SK-N-SH (cell line): ENCODE measurements at regions of chr13 and their contacts with region 1.

Region 1: GRCh38 chr13:24053519-24054251 is 106.8 kb upstream of the SPATA13 start:
- DNase-seq: peak; percentile 76
- H3K4me3 ChIP-seq: no peak overlapping the region
- H3K27ac ChIP-seq: no peak overlapping the region
- H3K4me1 ChIP-seq: peaks cover 5 to 15% of the 10 kb centered on the region in 2 experiments; a peak in 3 of 4 replicates
- H3K27me3 ChIP-seq: no peaks in the 10 kb centered on the region
- CTCF ChIP-seq: peak; percentile 75
- EP300 ChIP-seq: no peak
- RAD21 ChIP-seq: peak; percentile 81

Region 2: DNA sequence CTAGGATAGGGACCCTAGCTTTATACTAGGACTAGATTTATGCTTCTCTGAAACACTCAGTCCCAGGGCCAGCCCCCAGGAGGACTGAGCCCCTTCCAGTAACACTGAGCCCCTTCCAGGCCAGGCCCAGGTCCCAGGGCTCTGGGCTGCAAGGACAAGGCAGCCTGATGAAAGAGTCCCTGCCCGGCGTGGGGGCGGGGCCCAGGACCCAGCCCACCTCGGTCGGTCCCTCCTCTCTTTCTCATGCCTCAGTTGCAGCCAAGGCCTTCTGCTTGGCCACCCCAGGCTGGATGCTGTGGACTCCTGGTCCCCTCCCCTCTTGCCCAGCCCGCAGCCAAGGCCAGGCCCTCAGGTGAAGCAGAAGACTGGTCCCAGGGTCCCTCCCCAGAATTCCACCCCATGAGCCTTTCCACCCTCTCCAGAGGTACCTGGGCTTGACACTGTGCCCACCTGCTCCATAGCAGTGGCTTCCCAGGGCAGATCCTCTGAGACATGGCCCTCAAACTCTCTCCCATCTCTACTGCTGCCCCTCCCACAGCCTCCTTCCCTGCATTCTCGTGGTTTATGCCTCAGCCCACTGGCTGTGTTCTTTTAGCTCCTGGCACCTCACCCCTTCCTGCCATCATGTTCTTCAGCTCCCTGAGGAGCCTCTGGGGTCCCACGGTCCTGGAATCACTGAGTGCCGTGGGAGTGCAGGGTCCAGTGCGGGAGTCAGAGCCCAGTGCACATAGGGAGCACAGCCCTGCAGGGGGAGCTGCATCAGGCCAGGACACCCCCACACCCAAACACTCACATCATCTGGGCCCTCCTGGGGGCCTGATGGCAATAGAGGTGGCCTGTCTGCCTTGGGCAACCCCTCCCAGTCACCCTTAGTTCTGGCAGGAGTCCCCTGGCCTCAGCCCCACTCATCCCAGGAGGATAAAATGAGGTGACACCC is 102.7 kb before region 1 on chr13:
- CTCF ChIA-PET with region 1: no interaction called
- POLR2A ChIA-PET with region 1: no interaction called
- DNase-seq: no peak
- H3K4me3 ChIP-seq: no peak overlapping the region
- H3K27ac ChIP-seq: no peak overlapping the region
- H3K4me1 ChIP-seq: no peaks in the 10 kb centered on the region; a peak in 1 of 4 replicates
- H3K27me3 ChIP-seq: no peaks in the 10 kb centered on the region
- CTCF ChIP-seq: no peak
- EP300 ChIP-seq: no peak
- RAD21 ChIP-seq: no peak

Region 3: DNA sequence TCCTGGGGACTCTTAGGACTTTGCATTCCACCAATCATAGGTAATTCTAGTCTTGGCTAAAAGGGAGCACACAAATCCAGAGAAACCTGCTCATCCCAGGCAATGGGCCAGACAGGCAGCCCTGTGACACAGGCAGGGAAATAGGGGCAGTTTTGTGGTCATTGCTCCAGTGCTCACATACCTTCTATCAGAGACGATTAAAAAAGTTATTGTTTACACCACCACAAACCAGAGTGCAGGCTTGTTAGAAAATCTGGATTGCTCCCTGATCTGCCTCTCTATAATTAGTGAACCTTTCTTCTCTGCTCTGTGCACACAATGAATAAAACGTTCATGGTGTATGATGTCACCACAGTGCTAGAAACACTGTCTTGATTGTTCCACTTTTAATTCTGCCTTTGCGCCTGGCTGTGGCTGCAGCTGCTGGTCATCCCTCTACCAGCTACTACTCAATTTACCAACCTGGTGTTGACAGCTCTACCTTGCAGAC is 14.8 kb before region 1 on chr13:
- CTCF ChIA-PET with region 1: interaction called, 22 read pairs
- POLR2A ChIA-PET with region 1: no interaction called
- DNase-seq: no peak
- H3K4me3 ChIP-seq: no peak overlapping the region
- H3K27ac ChIP-seq: peak overlapping the region; percentile 25 to 54; a peak in 2 of 4 replicates
- H3K4me1 ChIP-seq: peaks cover 0 to 13% of the 10 kb centered on the region in 2 experiments; a peak in 1 of 4 replicates
- H3K27me3 ChIP-seq: no peaks in the 10 kb centered on the region
- CTCF ChIP-seq: no peak
- EP300 ChIP-seq: peak in 1 of 2 experiments; percentile 21; a peak in 1 of 4 replicates
- RAD21 ChIP-seq: no peak

Region 4: GRCh38 chr13:24202215-24202614 is 148.5 kb after region 1 on chr13:
- CTCF ChIA-PET with region 1: interaction called, 10 read pairs
- POLR2A ChIA-PET with region 1: no interaction called
- DNase-seq: no peak
- H3K4me3 ChIP-seq: no peak overlapping the region
- H3K27ac ChIP-seq: no peak overlapping the region
- H3K4me1 ChIP-seq: no peaks in the 10 kb centered on the region; a peak in 2 of 4 replicates
- H3K27me3 ChIP-seq: no peaks in the 10 kb centered on the region
- CTCF ChIP-seq: no peak
- EP300 ChIP-seq: no peak
- RAD21 ChIP-seq: no peak

Region 5: GRCh38 chr13:24220086-24220703 is 166.5 kb after region 1 on chr13:
- CTCF ChIA-PET with region 1: interaction called, 58 read pairs
- POLR2A ChIA-PET with region 1: no interaction called
- DNase-seq: peak; percentile 77
- H3K4me3 ChIP-seq: no peak overlapping the region; a peak in 1 of 4 replicates
- H3K27ac ChIP-seq: no peak overlapping the region
- H3K4me1 ChIP-seq: peaks cover 0 to 11% of the 10 kb centered on the region in 2 experiments; a peak in 2 of 4 replicates
- H3K27me3 ChIP-seq: no peaks in the 10 kb centered on the region
- CTCF ChIP-seq: peak; percentile 85
- EP300 ChIP-seq: no peak
- RAD21 ChIP-seq: peak; percentile 96

Region 6: DNA sequence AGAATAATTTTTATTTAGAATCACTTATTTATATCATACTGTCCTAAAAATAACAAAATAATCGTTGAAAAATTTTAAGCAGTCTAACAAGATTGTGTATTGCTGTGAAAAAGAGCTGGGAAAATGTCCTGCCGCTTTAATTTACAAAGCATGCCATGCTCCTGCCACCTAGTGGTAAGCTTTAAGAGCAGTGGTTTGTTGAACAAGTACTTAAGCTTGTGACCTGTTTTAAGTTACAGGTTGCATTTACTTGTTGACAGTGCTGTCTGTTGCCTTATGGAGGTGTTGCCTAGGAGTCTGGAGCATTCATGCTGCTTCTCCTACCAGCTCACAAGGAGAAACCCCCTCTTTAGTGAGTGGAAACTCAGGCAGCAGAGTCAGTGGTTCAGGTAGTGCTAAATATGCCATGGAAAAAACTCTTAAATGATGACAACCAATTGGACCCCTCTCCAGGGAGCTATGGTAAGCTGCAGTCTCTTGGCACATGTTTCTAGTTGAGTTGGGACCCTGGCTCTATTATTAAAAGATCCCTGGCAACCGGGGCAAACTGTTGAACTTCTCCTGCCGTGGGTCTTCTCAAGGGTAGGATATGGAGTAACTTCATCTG is 175.3 kb after region 1 on chr13:
- CTCF ChIA-PET with region 1: interaction called, 19 read pairs
- POLR2A ChIA-PET with region 1: no interaction called
- DNase-seq: peak; percentile 53
- H3K4me3 ChIP-seq: no peak overlapping the region
- H3K27ac ChIP-seq: no peak overlapping the region
- H3K4me1 ChIP-seq: peaks cover 0 to 2% of the 10 kb centered on the region in 2 experiments; a peak in 2 of 4 replicates
- H3K27me3 ChIP-seq: no peaks in the 10 kb centered on the region
- CTCF ChIP-seq: peak; percentile 90
- EP300 ChIP-seq: no peak
- RAD21 ChIP-seq: peak; percentile 80